ENCODE measurements at regions of chr20 and their contacts with region 1.

Region 1: DNA sequence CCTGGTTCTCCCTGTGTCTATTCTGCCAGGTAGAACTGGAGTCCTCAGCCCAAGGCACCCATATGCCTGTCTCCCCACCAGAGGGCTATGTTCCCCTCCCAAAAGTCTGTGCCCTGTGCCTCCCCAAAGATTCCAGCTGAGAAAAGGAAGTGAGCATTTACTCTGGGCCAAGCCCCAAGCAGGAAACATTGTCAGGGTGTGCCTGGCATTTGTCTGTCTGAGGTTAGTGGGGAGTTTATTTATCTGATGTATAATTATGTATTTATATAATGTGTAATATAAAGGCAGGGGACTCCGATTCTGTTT is 5.6 kb downstream of the GDF5 start:
- DNase-seq: peak in 3 of 5 donors; percentile 19 to 28 (median 19)
- H3K4me3 ChIP-seq: no peak overlapping the region
- H3K4me3 Mint-ChIP-seq: no peak overlapping the region
- H3K27ac ChIP-seq: no peak overlapping the region
- H3K27ac Mint-ChIP-seq: peak overlapping the region in 3 of 7 donors; percentile 72 to 91 (median 79)
- H3K4me1 ChIP-seq: no peaks in the 10 kb centered on the region
- H3K4me1 Mint-ChIP-seq: peaks cover 0 to 16% (median 1%) of the 10 kb centered on the region in 4 donors
- H3K27me3 ChIP-seq: no peaks in the 10 kb centered on the region
- H3K27me3 Mint-ChIP-seq: no peaks in the 10 kb centered on the region

Region 2: GRCh38 chr20:35421322-35421721 is 11.1 kb before region 1 on chr20:
- CTCF ChIA-PET with region 1: no interaction called
- POLR2A ChIA-PET with region 1: no interaction called
- intact Hi-C with region 1: no loop called
- DNase-seq: no peak
- H3K4me3 ChIP-seq: no peak overlapping the region
- H3K4me3 Mint-ChIP-seq: no peak overlapping the region
- H3K27ac ChIP-seq: no peak overlapping the region
- H3K27ac Mint-ChIP-seq: no peak overlapping the region
- H3K4me1 ChIP-seq: no peaks in the 10 kb centered on the region
- H3K4me1 Mint-ChIP-seq: no peaks in the 10 kb centered on the region
- H3K27me3 ChIP-seq: no peaks in the 10 kb centered on the region
- H3K27me3 Mint-ChIP-seq: peaks cover 9 to 12% of the 10 kb centered on the region in 2 donors

Region 3: GRCh38 chr20:35447082-35447789 is 14.9 kb after region 1 on chr20:
- CTCF ChIA-PET with region 1: interaction called, 20 read pairs
- POLR2A ChIA-PET with region 1: no interaction called
- intact Hi-C with region 1: no loop called
- DNase-seq: peak; percentile 80 to 84 (median 83)
- H3K4me3 ChIP-seq: peak overlapping the region in 1 of 2 donors; percentile 44
- H3K4me3 Mint-ChIP-seq: peak overlapping the region; percentile 80 to 94 (median 87)
- H3K27ac ChIP-seq: no peak overlapping the region
- H3K27ac Mint-ChIP-seq: peak overlapping the region in 4 of 7 donors; percentile 54 to 82 (median 76)
- H3K4me1 ChIP-seq: no peaks in the 10 kb centered on the region
- H3K4me1 Mint-ChIP-seq: peaks cover 0 to 3% (median 3%) of the 10 kb centered on the region in 4 donors
- H3K27me3 ChIP-seq: no peaks in the 10 kb centered on the region
- H3K27me3 Mint-ChIP-seq: peaks cover 3% of the 10 kb centered on the region in 2 donors